HEK293 (cell line): ENCODE measurements at regions of chr17 and their contacts with region 1.

Region 1: GRCh38 chr17:43940630-43941029 is 1.6 kb downstream of the PPY start:
- H3K4me3 ChIP-seq: no peak overlapping the region
- H3K27ac ChIP-seq: no peak overlapping the region
- H3K4me1 ChIP-seq: no peaks in the 10 kb centered on the region; the same call in 1 of the 2 replicates
- CTCF ChIP-seq: peak; percentile 68

Region 2: GRCh38 chr17:43834111-43834510 is 106.5 kb before region 1 on chr17:
- CTCF ChIA-PET with region 1: no interaction called
- POLR2A ChIA-PET with region 1: no interaction called
- H3K4me3 ChIP-seq: no peak overlapping the region
- H3K27ac ChIP-seq: no peak overlapping the region
- H3K4me1 ChIP-seq: peaks cover 3% of the 10 kb centered on the region; the same call in 1 of the 2 replicates
- CTCF ChIP-seq: no peak

Region 3: GRCh38 chr17:43907425-43907981 is 33.1 kb before region 1 on chr17 and contains the start of gene MPP2:
- CTCF ChIA-PET with region 1: interaction called, 51 read pairs
- POLR2A ChIA-PET with region 1: interaction called, 3 read pairs
- H3K4me3 ChIP-seq: peak within 1 kb of the TSS; percentile 47
- H3K27ac ChIP-seq: peak within 1 kb of the TSS; percentile 51; the same call in 1 of the 2 replicates
- H3K4me1 ChIP-seq: peaks cover 12% of the 10 kb centered on the region; the same call in 1 of the 2 replicates
- CTCF ChIP-seq: 0 out of 2 replicates have a peak, but pooled peaks have one; percentile 62

Region 4: DNA sequence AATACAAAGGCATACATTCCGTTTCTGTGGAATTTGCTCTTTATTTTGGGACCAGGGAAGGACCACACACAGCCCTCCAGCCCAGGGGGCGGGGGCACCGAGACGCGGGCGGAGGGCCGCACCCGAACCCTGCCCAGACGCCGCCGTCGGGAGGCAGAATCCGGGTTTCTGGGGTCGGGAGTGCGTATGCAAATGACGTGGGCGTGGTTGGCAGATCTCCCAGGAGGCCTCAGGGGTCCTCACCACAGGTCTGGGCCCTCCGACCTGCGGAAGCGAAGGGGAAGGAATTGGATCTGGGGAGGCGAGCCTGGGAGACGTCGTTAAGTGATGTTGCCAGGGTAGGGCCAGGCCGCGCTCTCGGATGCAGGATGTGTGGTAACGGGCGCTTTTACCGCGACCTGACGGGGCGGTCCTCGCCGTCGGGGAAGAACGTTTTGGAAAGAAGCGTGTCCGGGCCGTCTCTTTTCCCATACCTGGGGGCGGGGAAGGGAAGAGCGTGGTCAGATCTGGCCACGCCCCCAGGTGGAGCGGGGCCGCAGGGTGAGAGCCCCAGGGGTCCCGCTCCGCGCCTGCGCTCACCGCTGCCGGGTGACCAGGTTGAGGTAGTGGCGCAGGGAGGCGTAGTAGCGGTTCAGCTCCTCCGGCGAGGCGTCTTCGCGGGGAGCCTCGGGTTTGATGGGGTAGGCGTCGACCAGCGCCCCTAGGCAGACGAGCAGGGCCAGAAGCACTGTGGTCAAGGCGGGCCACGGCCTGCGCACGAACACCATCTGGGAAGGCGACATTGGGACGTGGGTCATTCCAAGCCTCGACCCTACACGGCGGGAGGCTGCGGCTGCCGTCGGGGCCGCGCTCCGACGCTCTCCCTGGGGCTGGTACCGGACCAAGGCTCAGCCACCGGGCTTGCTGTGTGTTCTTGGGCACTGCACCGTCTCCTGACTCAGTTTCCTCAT is 12.4 kb after region 1 on chr17:
- CTCF ChIA-PET with region 1: interaction called, 56 read pairs
- POLR2A ChIA-PET with region 1: no interaction called
- H3K4me3 ChIP-seq: no peak overlapping the region
- H3K27ac ChIP-seq: no peak overlapping the region
- H3K4me1 ChIP-seq: no peaks in the 10 kb centered on the region; the same call in 1 of the 2 replicates
- CTCF ChIP-seq: no peak

Region 5: GRCh38 chr17:43966271-43966670 is 25.6 kb after region 1 on chr17:
- CTCF ChIA-PET with region 1: interaction called, 12 read pairs
- POLR2A ChIA-PET with region 1: no interaction called
- H3K4me3 ChIP-seq: no peak overlapping the region
- H3K27ac ChIP-seq: no peak overlapping the region
- H3K4me1 ChIP-seq: no peaks in the 10 kb centered on the region
- CTCF ChIP-seq: no peak

Region 6: GRCh38 chr17:43983515-43984411 is 43.1 kb after region 1 on chr17:
- CTCF ChIA-PET with region 1: interaction called, 27 read pairs
- POLR2A ChIA-PET with region 1: no interaction called
- H3K4me3 ChIP-seq: peak overlapping the region; percentile 31
- H3K27ac ChIP-seq: no peak overlapping the region; the same call in 1 of the 2 replicates
- H3K4me1 ChIP-seq: no peaks in the 10 kb centered on the region; the same call in 1 of the 2 replicates
- CTCF ChIP-seq: peak; percentile 65

Region 7: DNA sequence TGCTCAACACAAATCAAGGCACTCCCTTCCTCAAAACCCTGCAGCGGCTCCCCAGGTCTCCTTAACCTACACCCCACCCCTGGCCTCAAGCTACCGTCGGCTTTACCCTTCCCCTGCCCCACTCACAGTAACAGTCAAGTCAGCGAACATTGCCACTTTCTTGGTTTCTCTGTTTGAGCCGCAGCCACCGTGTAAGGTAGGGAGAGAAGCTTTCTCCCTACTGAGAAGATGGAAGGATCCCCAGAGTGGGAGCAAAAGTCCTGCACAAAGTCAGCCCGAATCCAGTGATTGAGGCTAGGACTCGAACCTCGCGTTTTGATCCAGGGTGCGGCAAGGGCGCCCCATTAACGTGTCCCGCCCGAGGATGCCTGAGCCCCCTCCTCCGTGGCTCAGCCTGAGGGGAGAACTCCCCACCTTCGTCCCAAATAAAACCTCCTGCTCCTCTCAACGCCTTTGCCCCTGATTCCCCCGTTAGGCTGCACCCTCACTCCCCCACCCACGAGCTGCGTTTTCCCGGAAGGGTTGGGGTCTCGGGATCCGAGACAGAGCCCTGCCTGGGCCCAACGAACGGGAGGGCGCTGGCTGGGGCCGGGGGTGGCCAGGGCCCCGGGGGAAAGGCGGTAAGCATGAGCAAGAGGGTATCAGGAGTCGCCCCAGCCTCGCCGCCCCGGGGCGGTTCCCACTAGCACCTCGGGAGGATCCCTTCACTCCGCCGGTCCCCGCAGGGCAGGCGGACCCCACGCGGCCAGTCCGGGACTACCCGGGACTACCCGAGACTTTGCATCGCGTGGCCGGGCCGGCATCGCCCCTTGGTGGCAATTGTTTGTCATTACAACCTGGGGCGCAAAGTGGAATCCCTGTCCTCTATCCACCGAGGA is 53.9 kb after region 1 on chr17:
- CTCF ChIA-PET with region 1: interaction called, 267 read pairs
- POLR2A ChIA-PET with region 1: interaction called, 3 read pairs
- H3K4me3 ChIP-seq: peak overlapping the region; percentile 14
- H3K27ac ChIP-seq: no peak overlapping the region
- H3K4me1 ChIP-seq: no peaks in the 10 kb centered on the region
- CTCF ChIP-seq: peak; percentile 97

Region 8: GRCh38 chr17:44006598-44007345 is 66.1 kb after region 1 on chr17:
- CTCF ChIA-PET with region 1: interaction called, 16 read pairs
- POLR2A ChIA-PET with region 1: interaction called, 6 read pairs
- H3K4me3 ChIP-seq: peak overlapping the region; percentile 72
- H3K27ac ChIP-seq: peak overlapping the region; percentile 71
- H3K4me1 ChIP-seq: peaks cover 9% of the 10 kb centered on the region
- CTCF ChIP-seq: peak; percentile 61